Activated naive CD4-positive, alpha-beta T cell treated with anti-CD3 and anti-CD28 coated beads, Interleukin-2, amount 10 ng/mL, durations not matched to agents 7 days and 5 days (primary cell): ENCODE measurements at regions of chr2 and their contacts with region 1.

Region 1: GRCh38 chr2:1550658-1551316 is 137.5 kb downstream of the TPO start:
- DNase-seq: peak; percentile 70
- H3K4me3 Mint-ChIP-seq: no peak overlapping the region
- H3K27ac Mint-ChIP-seq: no peak overlapping the region
- H3K4me1 Mint-ChIP-seq: peaks cover 6% of the 10 kb centered on the region
- H3K27me3 Mint-ChIP-seq: peaks cover 5% of the 10 kb centered on the region

Region 2: DNA sequence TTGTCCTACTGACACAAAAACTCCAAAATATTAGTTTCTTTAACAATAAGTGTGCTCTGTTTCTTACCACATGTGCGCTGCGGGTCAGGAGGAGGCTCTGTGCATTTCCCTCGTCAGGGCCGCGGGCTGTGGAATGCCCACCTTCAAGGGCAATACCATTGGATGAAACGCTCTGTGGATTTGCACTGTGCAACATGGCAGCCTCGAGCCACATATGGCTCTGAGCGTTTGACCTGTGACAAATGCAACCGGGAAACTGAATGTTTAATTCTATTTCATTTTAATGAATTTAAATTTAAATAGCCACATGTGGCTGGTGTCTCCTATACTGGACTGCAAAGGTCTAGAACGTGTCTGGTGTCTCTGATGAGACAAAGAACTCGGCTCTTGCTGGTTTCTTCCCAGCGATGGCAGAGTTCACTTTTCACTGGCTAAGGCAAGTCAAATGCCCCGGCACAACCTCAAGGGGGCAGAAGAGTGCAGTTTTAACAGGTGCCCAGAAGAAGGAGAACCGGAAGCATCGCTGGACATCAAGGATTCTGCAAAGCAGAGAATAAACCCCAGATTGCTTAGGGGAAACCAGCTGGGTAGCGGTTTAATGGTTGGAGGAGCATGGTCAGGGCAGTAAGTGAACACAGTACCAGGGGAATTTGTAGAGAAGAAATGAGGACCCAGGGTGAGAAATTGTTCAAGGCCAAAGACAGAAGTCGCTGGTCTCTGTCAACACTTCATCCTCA is 836.6 kb before region 1 on chr2:
- CTCF ChIA-PET with region 1: interaction called, 26 read pairs
- DNase-seq: peak; percentile 62
- H3K4me3 Mint-ChIP-seq: no peak overlapping the region
- H3K27ac Mint-ChIP-seq: no peak overlapping the region
- H3K4me1 Mint-ChIP-seq: no peaks in the 10 kb centered on the region
- H3K27me3 Mint-ChIP-seq: peaks cover 21% of the 10 kb centered on the region

Region 3: GRCh38 chr2:953975-954686 is 596.7 kb before region 1 on chr2:
- CTCF ChIA-PET with region 1: interaction called, 15 read pairs
- DNase-seq: no peak
- H3K4me3 Mint-ChIP-seq: no peak overlapping the region
- H3K27ac Mint-ChIP-seq: no peak overlapping the region
- H3K4me1 Mint-ChIP-seq: peaks cover 11% of the 10 kb centered on the region
- H3K27me3 Mint-ChIP-seq: peaks cover 43% of the 10 kb centered on the region

Region 4: DNA sequence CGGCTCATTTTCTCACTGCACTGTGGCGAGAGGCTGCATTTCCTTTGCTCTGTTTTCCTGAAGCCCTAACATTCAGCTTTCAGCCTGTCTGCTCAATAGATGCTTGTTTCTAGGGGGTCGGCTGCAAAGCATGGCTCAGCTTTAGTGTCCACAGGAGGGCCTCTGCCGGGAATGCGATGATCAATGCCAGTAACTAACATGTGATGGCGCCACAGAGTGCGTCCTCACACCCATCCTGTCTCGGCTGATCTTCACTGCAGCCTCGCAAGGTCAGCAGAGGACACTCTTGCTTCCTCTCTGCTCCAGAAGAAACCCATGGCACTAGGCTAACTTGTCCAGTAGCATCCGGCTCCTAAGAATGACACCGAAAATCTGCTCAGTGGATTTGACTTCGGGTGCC is 349.9 kb after region 1 on chr2:
- CTCF ChIA-PET with region 1: no interaction called
- DNase-seq: no peak
- H3K4me3 Mint-ChIP-seq: no peak overlapping the region
- H3K27ac Mint-ChIP-seq: no peak overlapping the region
- H3K4me1 Mint-ChIP-seq: no peaks in the 10 kb centered on the region
- H3K27me3 Mint-ChIP-seq: no peaks in the 10 kb centered on the region